BJ (cell line): ENCODE measurements at regions of chr7 and their contacts with region 1.

Region 1: DNA sequence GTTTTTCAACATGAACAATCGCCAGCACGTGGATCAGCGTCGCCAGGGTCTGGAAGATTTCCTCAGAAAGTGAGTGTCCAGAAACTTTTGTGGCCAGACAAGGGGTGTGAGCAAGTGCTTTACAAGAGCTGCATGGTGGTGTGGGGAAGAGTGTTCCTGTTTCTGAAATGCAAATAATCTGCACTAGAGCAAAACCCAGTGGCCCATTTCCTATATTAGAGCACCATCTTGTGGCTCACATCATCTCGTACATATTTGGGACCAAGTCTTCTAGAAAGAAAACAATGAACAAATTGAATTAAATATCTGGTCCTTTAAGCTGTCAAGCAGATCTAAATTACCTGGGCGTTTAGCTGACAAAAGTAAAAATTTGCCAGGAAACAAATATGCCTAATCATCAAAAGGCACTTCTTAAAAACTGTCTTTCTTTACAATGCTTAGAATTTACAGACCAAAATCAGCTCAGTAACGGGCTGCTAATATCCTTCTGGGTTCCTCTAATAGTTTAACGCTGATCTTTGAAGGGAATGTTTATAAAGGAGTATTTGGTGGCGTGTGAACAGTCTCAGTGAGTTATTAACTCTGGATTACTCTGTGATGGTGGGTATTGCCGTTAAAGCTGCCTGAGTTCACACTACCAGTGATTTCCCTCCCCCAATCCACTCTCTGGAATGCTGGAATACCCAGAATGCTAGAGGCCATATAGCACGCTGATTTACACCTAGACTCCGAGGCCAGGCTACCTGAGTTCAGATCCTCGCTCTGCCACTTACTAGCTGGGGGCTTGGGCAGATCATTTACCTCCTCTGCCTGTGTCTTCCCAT is 73.6 kb downstream of the SNX10 start:
- DNase-seq: peak; percentile 13
- H3K4me3 ChIP-seq: no peak overlapping the region
- H3K27me3 ChIP-seq: 0 out of 2 replicates have a peak, but pooled peaks cover under 1% of the 10 kb centered on the region
- CTCF ChIP-seq: peak; percentile 71

Region 2: GRCh38 chr7:25894902-25895791 is 470.1 kb before region 1 on chr7:
- CTCF ChIA-PET with region 1: interaction called, 145 read pairs
- POLR2A ChIA-PET with region 1: no interaction called
- DNase-seq: no peak
- H3K4me3 ChIP-seq: no peak overlapping the region
- H3K27me3 ChIP-seq: peaks cover 6% of the 10 kb centered on the region
- CTCF ChIP-seq: peak; percentile 86

Region 3: DNA sequence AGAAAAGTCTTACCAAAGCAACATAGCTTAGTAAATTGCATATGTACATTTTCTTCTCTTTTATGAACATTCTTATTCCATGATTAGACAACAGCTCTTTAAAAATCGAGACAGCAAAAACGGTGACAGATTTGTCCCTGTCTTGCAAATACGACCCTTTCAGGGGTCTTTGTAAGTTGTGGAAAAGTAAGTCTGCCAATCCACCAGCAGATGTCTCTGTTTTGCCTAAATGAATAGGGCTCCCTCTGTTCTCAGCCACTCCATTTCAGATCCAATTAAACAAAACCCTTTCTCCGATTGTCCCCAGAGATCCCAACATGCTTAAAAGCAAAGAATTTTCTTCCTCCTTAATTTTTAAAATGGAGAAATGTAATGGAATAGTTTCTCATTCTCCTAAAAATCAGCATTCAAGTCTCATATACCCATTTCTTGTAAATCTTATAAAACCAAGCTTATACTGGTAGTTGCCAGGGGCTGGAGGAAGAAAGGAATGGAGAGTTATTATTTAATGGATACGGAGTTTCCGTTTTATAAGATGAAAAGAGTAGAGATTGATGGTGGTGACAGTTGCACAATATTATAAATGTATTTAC is 274.3 kb before region 1 on chr7:
- CTCF ChIA-PET with region 1: interaction called, 88 read pairs
- POLR2A ChIA-PET with region 1: no interaction called
- DNase-seq: peak; percentile 11
- H3K4me3 ChIP-seq: no peak overlapping the region
- H3K27me3 ChIP-seq: 0 out of 2 replicates have a peak, but pooled peaks cover 1% of the 10 kb centered on the region
- CTCF ChIP-seq: peak; percentile 70

Region 4: DNA sequence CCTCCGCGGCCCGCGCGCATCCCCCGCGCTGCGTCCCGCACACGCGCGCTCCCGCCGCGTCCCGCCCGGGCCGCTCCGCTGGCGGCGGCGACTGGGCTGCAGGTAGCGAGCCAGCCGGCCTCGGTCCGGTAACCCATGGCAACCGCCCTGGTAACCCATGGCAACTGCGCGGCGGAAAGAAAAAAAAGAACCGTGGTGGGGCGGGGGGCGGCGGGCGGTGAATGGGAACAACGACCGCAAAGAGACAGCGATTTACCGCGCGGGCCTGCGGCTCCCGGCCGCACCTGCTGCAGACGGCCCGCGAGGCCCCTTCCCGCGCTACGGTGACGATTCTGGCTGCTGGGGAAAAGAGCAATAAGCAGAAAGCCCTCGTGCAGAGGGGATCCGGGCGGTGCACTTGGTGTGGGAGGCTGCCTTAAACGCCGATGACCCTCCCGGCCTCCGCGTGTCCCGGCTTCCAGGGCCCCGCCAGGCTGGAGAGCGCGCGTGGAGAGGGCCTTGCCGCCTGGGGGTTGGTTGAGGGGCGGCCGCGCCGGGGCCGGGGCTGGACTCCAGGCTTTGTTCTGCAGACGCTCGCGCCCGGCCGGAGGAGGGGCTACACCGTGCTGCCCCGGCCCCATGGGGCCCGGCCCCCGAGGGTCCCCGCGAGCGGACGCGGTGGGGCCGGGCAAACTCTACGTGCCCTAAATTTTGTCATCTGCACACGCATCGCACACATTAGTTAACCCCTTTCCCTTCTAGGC is 11.1 kb after region 1 on chr7:
- CTCF ChIA-PET with region 1: interaction called, 18 read pairs
- POLR2A ChIA-PET with region 1: no interaction called
- DNase-seq: no peak
- H3K4me3 ChIP-seq: no peak overlapping the region
- H3K27me3 ChIP-seq: peaks cover 16% of the 10 kb centered on the region
- CTCF ChIP-seq: no peak

Region 5: DNA sequence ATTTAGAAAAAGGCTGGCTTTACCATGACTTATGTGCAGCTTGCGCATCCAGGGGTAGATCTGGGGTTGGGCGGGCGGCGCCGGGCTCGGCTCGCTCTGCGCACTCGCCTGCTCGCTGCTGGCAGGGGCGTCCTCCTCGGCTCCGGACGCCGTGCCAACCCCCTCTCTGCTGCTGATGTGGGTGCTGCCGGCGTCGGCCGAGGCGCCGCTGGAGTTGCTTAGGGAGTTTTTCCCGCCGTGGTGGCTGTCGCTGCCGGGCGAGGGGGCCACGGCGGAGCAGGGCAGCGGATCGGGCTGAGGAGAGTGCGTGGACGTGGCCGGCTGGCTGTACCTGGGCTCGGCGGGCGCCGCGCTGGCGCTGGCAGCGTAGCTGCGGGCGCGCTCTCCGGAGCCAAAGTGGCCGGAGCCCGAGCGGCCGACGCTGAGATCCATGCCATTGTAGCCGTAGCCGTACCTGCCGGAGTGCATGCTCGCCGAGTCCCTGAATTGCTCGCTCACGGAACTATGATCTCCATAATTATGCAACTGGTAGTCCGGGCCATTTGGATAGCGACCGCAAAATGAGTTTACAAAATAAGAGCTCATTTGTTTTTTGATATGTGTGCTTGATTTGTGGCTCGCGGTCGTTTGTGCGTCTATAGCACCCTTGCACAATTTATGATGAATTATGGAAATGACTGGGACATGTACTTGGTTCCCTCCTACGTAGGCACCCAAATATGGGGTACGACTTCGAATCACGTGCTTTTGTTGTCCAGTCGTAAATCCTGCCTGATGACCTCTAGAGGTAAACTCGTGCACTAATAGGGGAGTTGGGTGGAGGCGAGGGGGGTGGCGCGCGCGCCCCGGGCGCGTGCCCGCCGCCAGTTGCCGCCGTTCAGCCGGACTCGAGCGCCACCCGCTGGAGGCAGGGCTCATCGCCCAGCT is 778.0 kb after region 1 on chr7 and contains the start of gene HOXA5:
- CTCF ChIA-PET with region 1: interaction called, 11 read pairs
- POLR2A ChIA-PET with region 1: no interaction called
- DNase-seq: no peak
- H3K4me3 ChIP-seq: peak within 1 kb of the TSS; percentile 50
- H3K27me3 ChIP-seq: no peaks in the 10 kb centered on the region
- CTCF ChIP-seq: no peak; the same call in 1 of the 2 replicates
- polyA plus RNA-seq, gene HOXA5: 1.2 and 1.7 TPM in 2 replicates